Left ventricle myocardium inferior (tissue), 1 donor: ENCODE measurements at regions of chr6 and their contacts with region 1.

Region 1: DNA sequence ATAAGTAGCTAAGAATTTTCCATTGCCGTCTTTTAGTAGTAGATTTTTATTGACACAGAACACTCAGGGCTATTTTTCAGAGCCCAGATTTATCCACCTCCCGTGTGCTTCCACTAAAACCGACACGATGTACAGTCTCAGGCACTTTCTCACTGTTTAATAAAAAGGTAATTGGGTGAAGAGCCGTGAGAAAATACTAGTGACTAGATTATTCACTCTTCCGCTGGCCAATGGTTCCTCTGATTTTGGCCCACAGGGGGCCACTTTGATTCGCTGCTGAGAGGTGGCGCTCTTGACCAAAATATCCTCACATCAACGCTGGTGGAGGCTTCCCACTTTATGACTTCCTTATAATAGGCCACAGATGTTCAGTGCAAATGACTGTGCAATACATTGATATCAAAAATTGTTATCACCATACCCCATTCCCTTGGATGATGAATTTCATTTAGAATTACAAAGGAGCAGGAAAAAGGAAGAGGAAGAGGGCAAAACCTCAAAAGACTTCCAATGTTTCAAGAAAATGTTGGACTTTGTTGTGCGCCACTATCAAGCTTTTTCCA is 12.3 kb upstream of the HDDC2 start:
- DNase-seq: peak; percentile 56
- H3K4me3 ChIP-seq: no peak overlapping the region
- H3K27ac ChIP-seq: peak overlapping the region; percentile 25
- H3K4me1 ChIP-seq: peaks cover 16% of the 10 kb centered on the region
- H3K27me3 ChIP-seq: no peaks in the 10 kb centered on the region
- CTCF ChIP-seq: peak; percentile 90

Region 2: DNA sequence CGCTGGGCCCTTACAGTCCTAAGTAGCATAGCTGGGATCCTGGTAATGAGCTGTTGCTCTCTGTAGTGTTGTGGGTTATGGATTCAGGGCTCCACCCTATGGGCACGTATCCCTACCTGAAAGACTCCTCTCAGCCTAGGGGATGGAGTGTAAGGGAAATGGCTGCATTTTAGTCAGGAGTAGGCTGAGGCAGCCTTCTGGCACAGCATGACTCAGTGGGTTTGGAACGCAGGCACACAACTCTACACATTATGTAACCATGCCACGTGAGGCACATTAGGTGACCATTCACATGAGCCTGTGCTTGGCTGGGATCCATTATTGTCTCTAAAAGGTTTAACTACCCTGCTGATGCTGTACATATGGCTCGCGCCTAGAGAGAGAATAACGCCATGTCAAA is 40.1 kb before region 1 on chr6:
- intact Hi-C with region 1: no loop called
- DNase-seq: no peak
- H3K4me3 ChIP-seq: no peak overlapping the region
- H3K27ac ChIP-seq: peak overlapping the region; percentile 13
- H3K4me1 ChIP-seq: peaks cover 20% of the 10 kb centered on the region
- H3K27me3 ChIP-seq: no peaks in the 10 kb centered on the region
- CTCF ChIP-seq: no peak

Region 3: GRCh38 chr6:125753218-125753936 is 439.3 kb after region 1 on chr6:
- intact Hi-C with region 1: loop called (anchors 5 kb)
- DNase-seq: no peak
- H3K4me3 ChIP-seq: peak overlapping the region; percentile 79
- H3K27ac ChIP-seq: peak overlapping the region; percentile 95
- H3K4me1 ChIP-seq: peaks cover 65% of the 10 kb centered on the region
- H3K27me3 ChIP-seq: peaks cover 10% of the 10 kb centered on the region
- CTCF ChIP-seq: peak; percentile 55

Region 4: GRCh38 chr6:125765944-125766343 is 451.8 kb after region 1 on chr6:
- intact Hi-C with region 1: loop called (anchors 5 kb)
- DNase-seq: no peak
- H3K4me3 ChIP-seq: no peak overlapping the region
- H3K27ac ChIP-seq: peak overlapping the region; percentile 53
- H3K4me1 ChIP-seq: peaks cover 53% of the 10 kb centered on the region
- H3K27me3 ChIP-seq: no peaks in the 10 kb centered on the region
- CTCF ChIP-seq: no peak